AG04450 (cell line): ENCODE measurements at regions of chr15 and their contacts with region 1.

Region 1: GRCh38 chr15:42385206-42385979 is 26.1 kb downstream of the CAPN3 start:
- DNase-seq: peak; percentile 27
- H3K4me3 ChIP-seq: no peak overlapping the region
- H3K27ac ChIP-seq: no peak overlapping the region
- H3K27me3 ChIP-seq: peaks cover 4% of the 10 kb centered on the region
- CTCF ChIP-seq: peak; percentile 87

Region 2: GRCh38 chr15:42226648-42227047 is 158.7 kb before region 1 on chr15:
- CTCF ChIA-PET with region 1: interaction called, 11 read pairs
- POLR2A ChIA-PET with region 1: no interaction called
- DNase-seq: no peak
- H3K4me3 ChIP-seq: no peak overlapping the region
- H3K27ac ChIP-seq: no peak overlapping the region
- H3K27me3 ChIP-seq: no peaks in the 10 kb centered on the region
- CTCF ChIP-seq: no peak

Region 3: GRCh38 chr15:42273102-42273899 is 112.1 kb before region 1 on chr15 and contains the starts of genes GANC and TMEM87A:
- CTCF ChIA-PET with region 1: interaction called, 11 read pairs
- POLR2A ChIA-PET with region 1: interaction called, 14 read pairs
- DNase-seq: peak; percentile 98
- H3K4me3 ChIP-seq: peak within 1 kb of the TSS; percentile 92
- H3K27ac ChIP-seq: peak within 1 kb of the TSS; percentile 98
- H3K27me3 ChIP-seq: no peaks in the 10 kb centered on the region
- CTCF ChIP-seq: no peak
- polyA plus RNA-seq, gene GANC: 14.6 and 16.5 TPM in 2 replicates
- polyA plus RNA-seq, gene TMEM87A: 27.2 and 37.4 TPM in 2 replicates

Region 4: GRCh38 chr15:42367041-42367440 is 18.4 kb before region 1 on chr15:
- CTCF ChIA-PET with region 1: interaction called, 11 read pairs
- POLR2A ChIA-PET with region 1: no interaction called
- DNase-seq: no peak
- H3K4me3 ChIP-seq: no peak overlapping the region
- H3K27ac ChIP-seq: no peak overlapping the region
- H3K27me3 ChIP-seq: no peaks in the 10 kb centered on the region
- CTCF ChIP-seq: no peak

Region 5: GRCh38 chr15:42401544-42402454 is 16.4 kb after region 1 on chr15:
- CTCF ChIA-PET with region 1: interaction called, 10 read pairs
- POLR2A ChIA-PET with region 1: no interaction called
- DNase-seq: no peak
- H3K4me3 ChIP-seq: no peak overlapping the region
- H3K27ac ChIP-seq: no peak overlapping the region
- H3K27me3 ChIP-seq: no peaks in the 10 kb centered on the region
- CTCF ChIP-seq: no peak